ENCODE measurements at regions of chr5 and their contacts with region 1.

Region 1: DNA sequence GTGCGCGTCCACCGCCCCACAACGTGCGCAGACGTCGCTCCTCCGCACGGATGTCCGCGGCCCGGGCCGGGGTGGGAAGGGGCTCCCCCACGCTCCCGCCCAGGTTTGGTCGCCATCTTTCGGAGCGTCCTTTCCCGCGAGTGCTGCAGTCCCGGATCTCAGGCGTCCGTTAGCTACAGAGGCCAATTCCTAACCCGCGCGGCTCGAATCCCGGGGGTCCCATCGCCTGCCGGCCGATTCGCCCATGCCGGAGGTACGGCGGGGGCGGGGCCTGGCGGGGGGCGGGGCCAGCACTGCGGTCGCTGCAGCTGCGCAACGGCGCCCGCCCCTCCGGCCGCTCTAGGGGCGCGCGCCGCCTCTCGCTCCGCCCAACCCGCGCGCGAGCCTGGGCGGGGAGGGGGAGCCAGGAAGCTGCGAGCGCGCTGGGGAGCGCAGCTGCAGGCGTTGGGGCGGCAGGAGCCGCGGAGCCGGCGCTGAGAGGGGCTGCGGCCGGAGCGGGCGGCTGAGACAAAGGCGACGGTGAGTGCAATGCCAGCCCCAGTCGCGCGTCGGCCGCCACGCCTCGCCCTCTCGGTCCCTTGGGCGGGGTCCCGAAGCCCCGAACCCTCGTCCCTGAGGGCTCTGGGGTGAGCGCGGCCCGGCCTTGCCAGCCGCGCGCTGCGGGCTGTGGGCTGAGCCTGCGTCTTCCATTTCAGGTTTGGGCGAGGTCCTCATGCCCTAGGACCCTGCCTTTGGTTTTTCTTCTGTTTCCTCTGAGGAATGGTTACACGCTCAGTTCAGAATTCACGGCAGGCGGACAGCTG is at the start of gene CDC42SE2:
- DNase-seq: peak; percentile 83
- H3K4me3 Mint-ChIP-seq: peak within 1 kb of the TSS; percentile 84
- H3K27ac Mint-ChIP-seq: peak within 1 kb of the TSS; percentile 97
- H3K4me1 Mint-ChIP-seq: peaks cover 43% of the 10 kb centered on the region
- H3K27me3 Mint-ChIP-seq: no peaks in the 10 kb centered on the region
- total RNA-seq, gene CDC42SE2: 145 TPM

Region 2: GRCh38 chr5:131276072-131276471 is 12.2 kb after region 1 on chr5:
- CTCF ChIA-PET with region 1: interaction called, 14 read pairs
- POLR2A ChIA-PET with region 1: interaction called, 5 read pairs
- DNase-seq: peak; percentile 11
- H3K4me3 Mint-ChIP-seq: peak overlapping the region; percentile 34
- H3K27ac Mint-ChIP-seq: peak overlapping the region; percentile 69
- H3K4me1 Mint-ChIP-seq: peaks cover 86% of the 10 kb centered on the region
- H3K27me3 Mint-ChIP-seq: no peaks in the 10 kb centered on the region

Region 3: DNA sequence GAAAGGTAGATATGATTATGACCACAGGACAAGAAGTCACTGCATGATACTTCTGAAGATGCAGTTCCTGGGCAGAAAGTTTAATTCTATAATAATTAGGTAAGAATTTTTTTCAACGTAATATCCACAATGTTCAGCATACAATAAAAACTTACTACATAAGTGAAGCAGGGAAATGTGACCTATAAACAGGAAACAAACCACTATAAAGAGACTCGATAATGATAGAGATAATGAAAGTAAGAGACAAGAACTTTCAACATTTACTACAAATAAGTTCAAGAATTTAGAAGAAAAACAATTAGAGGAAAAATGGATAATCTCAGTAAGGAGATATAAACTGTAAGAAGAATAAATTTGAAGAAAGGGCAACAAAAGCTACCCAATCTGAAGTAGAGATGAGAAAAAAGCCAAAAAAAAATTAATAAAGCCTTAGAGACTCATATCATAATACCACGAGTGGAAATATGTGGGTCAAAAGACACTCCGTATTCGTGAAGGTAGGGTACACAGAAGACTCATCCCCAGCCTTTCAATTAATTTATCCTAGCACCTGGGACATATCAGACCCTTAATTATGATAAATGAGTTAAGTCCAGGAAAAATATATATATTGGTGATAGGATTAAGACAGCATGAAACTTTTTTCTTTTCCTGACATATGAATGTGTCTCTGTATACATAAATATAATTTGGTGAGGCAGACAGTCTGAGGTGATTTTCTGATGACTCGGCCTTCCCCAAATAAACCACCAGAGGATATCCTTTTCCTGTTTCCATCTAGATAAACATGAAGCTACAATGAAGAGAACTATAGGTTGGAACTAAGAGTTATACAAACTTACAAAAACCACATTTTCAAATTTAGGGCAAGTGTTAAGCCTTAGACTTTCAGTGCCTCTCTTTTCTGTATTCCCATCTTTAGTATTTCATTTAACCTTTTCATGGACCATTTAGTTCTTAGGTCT is 250.8 kb after region 1 on chr5:
- CTCF ChIA-PET with region 1: no interaction called
- POLR2A ChIA-PET with region 1: no interaction called
- DNase-seq: peak; percentile 40
- H3K4me3 Mint-ChIP-seq: peak overlapping the region; percentile 71
- H3K27ac Mint-ChIP-seq: peak overlapping the region; percentile 85
- H3K4me1 Mint-ChIP-seq: peaks cover 47% of the 10 kb centered on the region
- H3K27me3 Mint-ChIP-seq: no peaks in the 10 kb centered on the region